ENCODE measurements at regions of chr6 and their contacts with region 1.

Region 1: DNA sequence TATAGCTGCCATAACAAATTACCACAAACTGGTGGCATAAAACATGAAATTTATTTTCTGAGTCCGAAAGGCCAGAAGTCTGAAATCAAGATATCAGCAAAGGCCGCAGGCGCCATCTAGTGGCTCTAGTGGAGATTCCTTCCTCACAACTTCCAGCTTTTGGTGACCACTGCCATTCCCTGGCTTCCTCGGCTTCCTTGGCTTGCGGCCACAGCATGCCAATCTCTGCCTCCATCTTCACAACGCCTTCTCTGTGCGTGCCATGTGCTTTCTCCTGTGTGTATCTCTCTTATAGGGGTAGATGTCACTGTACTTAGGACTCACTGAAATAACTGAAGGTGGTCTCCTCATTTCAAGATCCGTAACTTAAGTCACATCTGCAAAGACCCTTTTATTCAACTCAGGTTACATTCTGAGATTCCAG is 5.4 kb upstream of the PLAGL1 start:
- DNase-seq: peak; percentile 50
- CTCF ChIP-seq: peak; percentile 85

Region 2: GRCh38 chr6:143060354-143060805 is 953.1 kb before region 1 on chr6:
- CTCF ChIA-PET with region 1: no interaction called
- POLR2A ChIA-PET with region 1: no interaction called
- DNase-seq: peak; percentile 84
- CTCF ChIP-seq: peak; percentile 28

Region 3: DNA sequence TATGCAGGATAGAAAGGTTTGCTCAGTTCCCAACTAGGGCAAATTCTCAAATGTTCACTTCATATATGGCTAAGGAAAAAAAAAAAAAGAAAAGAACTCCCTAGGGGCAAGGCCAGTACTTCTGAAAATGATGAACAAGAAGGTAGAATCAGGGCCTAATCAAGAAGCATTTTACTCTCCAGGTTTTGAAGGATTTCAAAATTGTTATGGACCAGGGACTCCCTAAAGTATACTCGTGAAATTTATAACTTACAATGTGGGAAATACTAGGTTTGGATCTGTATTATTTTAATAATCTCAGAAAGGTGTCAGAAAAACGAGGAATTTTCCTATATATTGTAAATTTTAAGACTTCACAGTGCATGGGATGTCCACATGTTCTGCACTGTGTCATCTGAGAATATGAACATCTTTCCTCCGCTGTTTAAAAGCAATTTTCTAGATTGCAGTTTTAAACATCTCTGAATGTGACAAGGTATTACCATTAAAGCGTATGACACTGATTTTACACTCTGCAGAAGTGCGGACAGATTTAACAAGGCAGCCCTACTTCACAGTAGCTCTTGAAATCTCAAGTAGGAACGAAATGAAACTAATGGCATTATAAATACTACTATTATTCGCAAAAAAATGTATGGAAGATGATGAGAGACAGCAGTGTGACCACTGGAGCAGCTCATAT is 19.4 kb before region 1 on chr6:
- CTCF ChIA-PET with region 1: interaction called, 14 read pairs
- POLR2A ChIA-PET with region 1: no interaction called
- DNase-seq: no peak
- CTCF ChIP-seq: no peak

Region 4: DNA sequence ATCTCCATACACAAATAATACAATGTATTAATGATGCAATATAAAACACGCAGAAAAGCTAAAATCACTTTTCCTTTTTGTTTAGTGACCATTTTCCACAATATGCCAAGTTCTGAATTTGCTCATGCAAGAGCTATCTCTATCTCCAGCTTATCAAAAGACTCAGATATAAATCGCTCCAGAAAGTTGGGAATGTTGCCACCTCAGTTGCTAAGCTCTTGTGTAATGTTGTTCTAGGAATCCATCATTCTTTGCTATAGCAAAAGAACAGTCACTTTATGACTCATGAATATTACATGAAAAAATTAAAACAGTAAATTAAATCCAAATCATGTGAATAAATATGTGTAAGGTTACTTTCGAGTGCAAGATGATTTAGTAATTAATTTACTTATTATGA is 14.1 kb before region 1 on chr6:
- CTCF ChIA-PET with region 1: interaction called, 12 read pairs
- POLR2A ChIA-PET with region 1: no interaction called
- DNase-seq: no peak
- CTCF ChIP-seq: no peak

Region 5: GRCh38 chr6:144027932-144028587 is 14.6 kb after region 1 on chr6:
- CTCF ChIA-PET with region 1: interaction called, 29 read pairs
- POLR2A ChIA-PET with region 1: no interaction called
- DNase-seq: no peak
- CTCF ChIP-seq: no peak

Region 6: GRCh38 chr6:144036064-144036834 is 22.8 kb after region 1 on chr6:
- CTCF ChIA-PET with region 1: interaction called, 21 read pairs
- POLR2A ChIA-PET with region 1: no interaction called
- DNase-seq: peak; percentile 48
- CTCF ChIP-seq: peak; percentile 11

Region 7: DNA sequence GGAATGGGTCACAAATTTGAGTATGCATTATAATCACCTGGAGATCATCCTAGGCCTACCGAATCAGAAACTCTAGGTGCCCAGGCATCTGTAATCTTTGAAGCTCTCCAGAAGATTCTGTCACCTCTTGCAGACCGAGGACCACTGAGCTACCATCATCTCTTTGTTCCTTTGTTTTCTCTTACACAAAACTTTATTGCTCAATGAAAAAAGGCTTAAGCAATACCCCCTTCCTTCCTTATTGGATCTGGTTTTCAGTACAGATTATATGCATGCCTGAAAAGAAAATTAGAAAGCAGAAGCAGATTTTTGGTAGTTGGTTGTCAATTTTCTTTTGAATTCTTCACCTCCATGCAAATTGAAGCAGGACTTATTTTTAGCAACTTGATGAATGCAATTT is 168.1 kb after region 1 on chr6:
- CTCF ChIA-PET with region 1: no interaction called
- POLR2A ChIA-PET with region 1: no interaction called
- DNase-seq: no peak
- CTCF ChIP-seq: no peak